Aorta (tissue), 5 donors: ENCODE measurements at regions of chr7 and their contacts with region 1.

Region 1: DNA sequence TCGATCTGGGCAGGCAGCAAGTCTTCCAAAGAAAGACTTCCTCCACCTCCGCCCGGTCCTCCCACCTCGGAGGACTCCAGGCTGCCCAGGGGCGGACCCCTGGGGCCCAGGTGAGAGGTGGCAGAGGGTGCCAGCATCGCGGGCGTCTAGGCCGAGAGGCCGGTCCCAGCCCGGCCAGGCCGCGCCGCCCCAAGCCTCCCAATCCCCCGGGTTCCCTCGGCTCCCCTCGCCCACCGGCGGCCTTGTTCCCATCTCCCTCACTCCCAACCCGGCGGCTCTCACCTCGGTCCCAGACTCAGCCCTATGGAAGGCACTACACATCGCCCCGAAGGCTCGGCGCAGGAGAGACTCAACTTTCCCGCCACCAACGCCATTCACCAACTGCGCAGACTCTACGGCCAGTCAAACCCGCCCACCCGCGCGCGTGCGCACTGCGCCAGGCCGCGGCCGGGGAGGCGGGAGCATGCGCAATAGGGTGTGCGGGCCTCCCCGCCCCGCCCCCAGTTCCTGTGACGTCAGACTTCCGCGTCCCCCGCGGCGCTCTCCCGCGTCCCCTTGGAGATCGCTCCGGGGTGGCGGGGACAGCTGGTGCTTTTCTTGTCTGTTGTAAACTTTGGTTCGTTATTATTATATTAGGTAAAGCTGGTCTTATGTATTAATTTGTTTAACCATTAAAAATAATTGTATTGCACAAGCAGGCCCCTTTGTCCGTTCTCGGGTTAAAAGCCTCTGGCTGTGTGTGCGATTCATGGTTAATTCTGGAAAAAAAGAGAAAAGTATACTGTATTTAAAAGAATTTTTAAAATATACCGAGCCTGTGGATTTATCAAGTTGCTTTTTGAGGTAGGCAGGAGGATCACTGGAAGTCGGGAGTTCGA is at the start of gene XRCC2:
- DNase-seq: peak; percentile 93 to 97
- ATAC-seq: peak; percentile 99
- H3K4me3 ChIP-seq: peak within 1 kb of the TSS; percentile 57 to 65
- H3K27ac ChIP-seq: no peak within 1 kb of the TSS
- H3K4me1 ChIP-seq: no peaks in the 10 kb centered on the region
- H3K27me3 ChIP-seq: no peaks in the 10 kb centered on the region
- total RNA-seq, gene XRCC2: 0.19 to 0.57 TPM

Region 2: GRCh38 chr7:152341039-152341913 is 334.7 kb before region 1 on chr7:
- intact Hi-C with region 1: loop called in 1 of 2 experiments (anchors 10 kb)
- DNase-seq: no peak
- ATAC-seq: peak; percentile 66
- H3K4me3 ChIP-seq: no peak overlapping the region
- H3K27ac ChIP-seq: no peak overlapping the region
- H3K4me1 ChIP-seq: peaks cover 1 to 3% of the 10 kb centered on the region in 2 donors
- H3K27me3 ChIP-seq: no peaks in the 10 kb centered on the region

Region 3: DNA sequence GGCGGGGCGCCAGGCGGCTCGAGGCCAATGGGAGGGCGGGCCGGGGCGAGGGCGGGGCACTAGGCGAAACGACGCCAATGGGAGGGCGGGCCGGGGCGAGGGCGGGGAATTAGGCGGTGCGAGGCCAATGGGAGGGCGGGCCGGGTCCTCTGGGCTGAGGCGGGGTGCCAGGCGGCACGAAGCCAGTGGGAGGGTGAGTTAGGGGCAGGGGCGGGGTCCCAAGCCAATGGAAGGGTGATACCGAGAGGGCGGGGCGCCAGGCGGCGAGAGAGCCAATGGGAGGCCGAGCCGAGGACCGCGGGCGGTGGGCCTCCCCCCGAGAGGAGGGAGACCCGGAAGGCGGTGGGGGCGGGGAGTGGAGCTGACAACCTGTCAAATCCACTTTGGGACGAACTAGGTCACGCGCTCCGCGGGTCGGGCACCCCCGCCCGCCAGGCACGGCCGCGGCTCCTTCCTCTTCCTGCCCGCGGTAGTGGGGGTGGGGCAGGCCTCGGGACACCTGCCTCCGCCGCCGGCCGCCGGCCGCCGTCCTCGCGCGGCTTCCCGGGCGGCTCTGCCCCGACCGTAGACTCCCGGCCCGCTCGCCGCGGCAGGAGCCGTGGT is 212.2 kb before region 1 on chr7:
- intact Hi-C with region 1: loop called in 1 of 2 experiments (anchors 5 kb)
- DNase-seq: peak; percentile 100
- ATAC-seq: peak; percentile 99
- H3K4me3 ChIP-seq: peak overlapping the region; percentile 75 to 77
- H3K27ac ChIP-seq: peak overlapping the region; percentile 43 to 59
- H3K4me1 ChIP-seq: no peaks in the 10 kb centered on the region
- H3K27me3 ChIP-seq: no peaks in the 10 kb centered on the region

Region 4: GRCh38 chr7:152512706-152513105 is 163.3 kb before region 1 on chr7:
- intact Hi-C with region 1: no loop called
- DNase-seq: no peak
- ATAC-seq: no peak
- H3K4me3 ChIP-seq: no peak overlapping the region
- H3K27ac ChIP-seq: no peak overlapping the region
- H3K4me1 ChIP-seq: no peaks in the 10 kb centered on the region
- H3K27me3 ChIP-seq: no peaks in the 10 kb centered on the region

Region 5: DNA sequence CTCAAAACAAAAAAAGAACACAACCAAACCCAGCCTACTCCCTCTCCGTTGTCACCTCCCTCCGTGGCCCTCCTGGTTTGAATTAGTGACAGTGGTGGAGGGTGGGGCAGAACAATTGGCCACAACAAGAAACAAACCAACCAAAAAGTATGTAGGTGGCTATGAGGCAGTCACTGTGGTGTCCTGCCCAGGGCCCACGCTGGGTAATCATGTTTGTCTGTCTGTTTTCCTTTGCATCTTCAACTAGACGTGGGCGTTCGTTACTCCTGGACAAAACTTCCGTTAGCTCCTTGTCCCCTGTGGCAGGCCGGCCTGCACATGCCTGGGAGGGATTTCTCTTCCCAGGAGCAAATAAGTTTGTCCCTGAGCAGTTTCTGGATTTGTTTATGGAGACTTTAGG is 78.5 kb before region 1 on chr7:
- intact Hi-C with region 1: no loop called
- DNase-seq: no peak
- ATAC-seq: no peak
- H3K4me3 ChIP-seq: no peak overlapping the region
- H3K27ac ChIP-seq: no peak overlapping the region
- H3K4me1 ChIP-seq: no peaks in the 10 kb centered on the region
- H3K27me3 ChIP-seq: no peaks in the 10 kb centered on the region

Region 6: DNA sequence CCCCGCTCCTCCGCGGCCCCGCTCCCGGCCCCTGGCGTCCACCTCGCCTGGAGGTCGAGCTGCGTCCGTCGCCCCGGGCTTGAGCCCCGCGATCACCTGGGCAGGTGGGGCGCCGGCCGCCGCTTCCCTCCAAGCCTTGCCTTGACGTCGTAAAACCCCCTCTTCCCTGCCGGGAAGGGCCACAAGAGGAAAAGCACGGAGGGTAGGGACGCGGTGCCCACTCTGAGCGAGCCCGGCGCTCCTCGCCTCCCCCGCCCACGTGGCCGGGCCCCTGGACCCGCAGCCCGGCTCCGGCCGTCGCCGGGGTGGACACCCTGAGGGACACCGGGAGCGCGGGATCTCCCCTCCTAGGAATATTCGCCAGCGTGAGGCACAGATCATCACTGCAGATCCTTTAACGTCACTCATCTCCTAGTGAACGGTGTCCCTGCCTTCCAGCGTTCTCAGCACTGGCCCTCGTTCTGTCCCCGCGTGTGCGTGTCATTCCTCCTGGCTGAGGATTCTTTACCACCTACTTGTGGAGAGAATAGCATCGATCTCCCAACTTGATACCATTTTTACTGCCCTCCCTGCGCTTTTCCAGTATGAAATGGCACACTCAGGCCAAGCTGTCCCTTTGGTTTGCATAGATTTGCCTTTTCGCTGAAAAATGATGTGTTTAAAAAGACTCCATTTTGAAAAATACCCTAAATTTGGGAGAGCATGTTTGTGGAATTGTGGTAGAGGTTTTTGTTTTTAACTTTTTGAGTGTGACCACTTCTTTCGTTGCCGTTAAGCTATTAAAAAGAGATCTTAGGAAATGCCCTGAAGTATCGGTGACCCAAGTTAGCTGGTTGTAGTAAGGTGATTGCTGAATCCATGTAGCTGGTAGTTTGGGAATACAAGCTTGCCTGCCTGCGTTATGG is 84.2 kb after region 1 on chr7:
- intact Hi-C with region 1: loop called in 1 of 2 experiments (anchors 5 kb)
- DNase-seq: peak; percentile 56 to 82
- ATAC-seq: peak; percentile 76
- H3K4me3 ChIP-seq: peak overlapping the region; percentile 64 to 77
- H3K27ac ChIP-seq: peak overlapping the region; percentile 36 to 64
- H3K4me1 ChIP-seq: peaks cover 0 to 3% of the 10 kb centered on the region in 2 donors
- H3K27me3 ChIP-seq: no peaks in the 10 kb centered on the region